Naive thymus-derived CD4-positive, alpha-beta T cell (primary cell): ENCODE measurements at regions of chr2 and their contacts with region 1.

Region 1: GRCh38 chr2:98518090-98518489 is 73.4 kb downstream of the INPP4A start:
- DNase-seq: peak; percentile 37 to 75 (median 66)
- ATAC-seq: peak; percentile 89
- H3K4me3 ChIP-seq: no peak overlapping the region
- H3K4me3 Mint-ChIP-seq: peak overlapping the region in 1 of 10 donors; percentile 16
- H3K27ac ChIP-seq: peak overlapping the region; percentile 9
- H3K27ac Mint-ChIP-seq: peak overlapping the region in 7 of 9 donors; percentile 24 to 75 (median 57)
- H3K4me1 ChIP-seq: peaks cover 30 to 49% of the 10 kb centered on the region in 2 donors
- H3K4me1 Mint-ChIP-seq: peaks cover 34 to 64% (median 58%) of the 10 kb centered on the region in 7 donors
- H3K27me3 ChIP-seq: no peaks in the 10 kb centered on the region
- H3K27me3 Mint-ChIP-seq: no peaks in the 10 kb centered on the region

Region 2: DNA sequence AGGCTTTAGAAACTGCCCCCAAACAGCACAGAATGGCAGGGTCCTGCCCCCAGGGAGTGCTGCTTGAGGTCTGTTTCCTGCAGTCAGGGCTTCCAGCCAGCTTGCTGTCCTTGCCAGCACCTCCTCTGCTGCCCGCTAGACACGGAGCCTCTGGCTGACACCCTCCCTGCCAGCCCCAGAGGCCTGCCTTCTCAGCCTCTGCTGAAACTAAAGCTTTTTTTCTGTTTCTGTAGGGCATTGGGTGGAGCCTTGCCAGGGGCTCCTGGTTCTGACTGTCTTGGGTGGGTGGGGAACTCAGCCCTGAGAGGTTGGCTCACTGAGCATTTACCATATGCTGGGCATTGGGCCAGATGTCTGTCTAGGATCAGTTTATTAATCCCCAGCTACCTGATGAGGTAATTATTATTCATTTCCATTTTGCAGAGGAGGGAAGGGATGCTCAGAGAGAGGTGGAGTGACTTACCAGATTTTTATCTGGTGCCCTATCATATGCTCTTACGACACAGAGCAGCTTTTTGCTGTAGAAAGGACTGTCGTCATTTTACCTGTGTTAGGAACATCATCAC is 38.0 kb before region 1 on chr2:
- CTCF ChIA-PET with region 1: interaction called, 3 read pairs
- POLR2A ChIA-PET with region 1: interaction called, 4 read pairs
- intact Hi-C with region 1: loop called (anchors 5 kb)
- DNase-seq: peak in 1 of 9 donors; percentile 70
- ATAC-seq: peak; percentile 58
- H3K4me3 ChIP-seq: peak overlapping the region; percentile 8
- H3K4me3 Mint-ChIP-seq: peak overlapping the region; percentile 41 to 82 (median 72)
- H3K27ac ChIP-seq: peak overlapping the region; percentile 64
- H3K27ac Mint-ChIP-seq: peak overlapping the region; percentile 81 to 95 (median 91)
- H3K4me1 ChIP-seq: peaks cover 87 to 97% of the 10 kb centered on the region in 2 donors
- H3K4me1 Mint-ChIP-seq: peaks cover 80 to 100% (median 98%) of the 10 kb centered on the region in 7 donors
- H3K27me3 ChIP-seq: no peaks in the 10 kb centered on the region
- H3K27me3 Mint-ChIP-seq: no peaks in the 10 kb centered on the region

Region 3: GRCh38 chr2:98502556-98503335 is 15.3 kb before region 1 on chr2:
- CTCF ChIA-PET with region 1: no interaction called
- POLR2A ChIA-PET with region 1: no interaction called
- intact Hi-C with region 1: loop called in 1 of 2 experiments (anchors 2 kb)
- DNase-seq: no peak
- ATAC-seq: no peak
- H3K4me3 ChIP-seq: no peak overlapping the region
- H3K4me3 Mint-ChIP-seq: peak overlapping the region in 9 of 10 donors; percentile 2 to 54 (median 40)
- H3K27ac ChIP-seq: no peak overlapping the region
- H3K27ac Mint-ChIP-seq: peak overlapping the region; percentile 20 to 91 (median 70)
- H3K4me1 ChIP-seq: peaks cover 33 to 79% of the 10 kb centered on the region in 2 donors
- H3K4me1 Mint-ChIP-seq: peaks cover 61 to 96% (median 95%) of the 10 kb centered on the region in 7 donors
- H3K27me3 ChIP-seq: no peaks in the 10 kb centered on the region
- H3K27me3 Mint-ChIP-seq: no peaks in the 10 kb centered on the region

Region 4: DNA sequence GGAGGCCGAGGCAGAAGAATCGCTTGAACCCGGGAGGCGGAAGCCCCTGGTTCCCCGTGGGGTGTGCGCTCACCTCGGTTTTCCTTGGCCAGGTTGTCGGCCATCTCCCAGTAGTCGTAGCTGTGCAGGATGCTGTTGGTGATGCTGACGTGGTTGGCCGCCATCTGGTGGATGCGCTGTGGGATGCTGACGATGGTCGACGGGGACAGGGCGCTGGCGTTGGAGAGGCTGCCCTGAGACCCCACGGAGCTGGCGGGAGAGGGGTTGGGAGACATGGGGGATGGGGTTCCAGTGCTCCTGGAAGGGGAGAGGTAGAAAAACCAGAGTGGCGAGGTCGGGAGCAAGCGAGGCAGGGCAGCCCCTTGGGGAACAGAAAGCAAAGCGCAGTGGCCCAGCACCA is 1036.1 kb after region 1 on chr2:
- CTCF ChIA-PET with region 1: no interaction called
- POLR2A ChIA-PET with region 1: no interaction called
- intact Hi-C with region 1: no loop called
- DNase-seq: no peak
- ATAC-seq: no peak
- H3K4me3 ChIP-seq: no peak overlapping the region
- H3K4me3 Mint-ChIP-seq: no peak overlapping the region
- H3K27ac ChIP-seq: no peak overlapping the region
- H3K27ac Mint-ChIP-seq: no peak overlapping the region
- H3K4me1 ChIP-seq: no peaks in the 10 kb centered on the region
- H3K4me1 Mint-ChIP-seq: peaks cover 0 to 5% (median 0%) of the 10 kb centered on the region in 7 donors
- H3K27me3 ChIP-seq: no peaks in the 10 kb centered on the region
- H3K27me3 Mint-ChIP-seq: peaks cover 0 to 7% (median 0%) of the 10 kb centered on the region in 5 donors